CD8-positive, alpha-beta T cell (primary cell): ENCODE measurements at regions of chr1 and their contacts with region 1.

Region 1: DNA sequence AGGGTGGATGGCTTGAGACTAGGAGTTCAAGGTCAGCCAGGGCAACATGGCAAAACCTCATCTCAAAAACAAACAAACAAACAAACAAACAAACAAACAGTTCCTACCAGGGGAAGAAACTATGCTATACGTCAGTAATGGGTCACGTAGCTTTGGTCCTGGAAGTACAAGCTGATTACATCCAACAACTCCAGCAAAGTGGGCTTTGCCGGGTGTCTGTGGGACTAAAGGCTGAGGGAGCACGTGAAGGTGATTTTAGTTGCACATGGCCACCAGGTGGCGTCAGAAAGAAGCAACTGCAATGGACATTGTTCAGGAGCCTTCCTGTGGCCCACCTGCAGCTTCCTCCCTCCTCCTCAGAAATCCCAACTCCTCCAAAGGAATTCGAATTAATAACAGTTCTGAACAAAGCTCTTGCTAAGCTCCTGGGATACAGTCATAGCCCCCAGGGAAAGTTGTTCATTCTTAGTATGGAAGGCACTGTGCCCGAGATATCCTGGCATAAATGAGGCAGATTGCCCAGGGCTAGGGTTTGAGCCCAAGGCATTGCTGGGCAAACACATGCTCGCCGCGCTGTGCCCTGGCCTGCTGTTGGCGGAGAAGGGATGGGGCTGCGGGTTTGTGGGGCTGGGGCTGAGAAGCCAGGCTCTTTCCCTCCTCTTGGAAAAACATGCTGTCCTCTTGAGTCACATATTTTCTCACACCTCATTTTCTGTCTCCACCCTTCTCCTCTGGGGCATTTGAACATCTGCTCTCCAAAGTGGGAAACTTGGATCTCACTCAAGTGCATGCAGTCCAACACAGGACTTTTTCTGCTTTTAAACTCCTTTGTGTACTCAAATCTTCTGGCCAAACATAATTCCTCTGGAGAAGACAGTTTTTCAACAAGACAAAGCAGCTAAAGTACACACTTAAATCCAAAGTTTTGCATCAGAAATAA is 28.6 kb downstream of the AKNAD1 start:
- DNase-seq: peak; percentile 35 to 79 (median 69)
- ATAC-seq: peak; percentile 77
- H3K4me3 ChIP-seq: no peak overlapping the region
- H3K4me3 Mint-ChIP-seq: no peak overlapping the region
- H3K27ac ChIP-seq: no peak overlapping the region
- H3K27ac Mint-ChIP-seq: no peak overlapping the region
- H3K4me1 ChIP-seq: no peaks in the 10 kb centered on the region
- H3K4me1 Mint-ChIP-seq: no peaks in the 10 kb centered on the region
- H3K27me3 ChIP-seq: no peaks in the 10 kb centered on the region
- H3K27me3 Mint-ChIP-seq: no peaks in the 10 kb centered on the region
- CTCF ChIP-seq: peak; percentile 72

Region 2: GRCh38 chr1:108678706-108679105 is 149.6 kb before region 1 on chr1:
- CTCF ChIA-PET with region 1: no interaction called
- POLR2A ChIA-PET with region 1: no interaction called
- intact Hi-C with region 1: no loop called
- DNase-seq: no peak
- ATAC-seq: no peak
- H3K4me3 ChIP-seq: no peak overlapping the region
- H3K4me3 Mint-ChIP-seq: no peak overlapping the region
- H3K27ac ChIP-seq: no peak overlapping the region
- H3K27ac Mint-ChIP-seq: no peak overlapping the region
- H3K4me1 ChIP-seq: peaks cover 8% of the 10 kb centered on the region
- H3K4me1 Mint-ChIP-seq: peaks cover 8% of the 10 kb centered on the region
- H3K27me3 ChIP-seq: no peaks in the 10 kb centered on the region
- H3K27me3 Mint-ChIP-seq: peaks cover 2% of the 10 kb centered on the region
- CTCF ChIP-seq: no peak

Region 3: DNA sequence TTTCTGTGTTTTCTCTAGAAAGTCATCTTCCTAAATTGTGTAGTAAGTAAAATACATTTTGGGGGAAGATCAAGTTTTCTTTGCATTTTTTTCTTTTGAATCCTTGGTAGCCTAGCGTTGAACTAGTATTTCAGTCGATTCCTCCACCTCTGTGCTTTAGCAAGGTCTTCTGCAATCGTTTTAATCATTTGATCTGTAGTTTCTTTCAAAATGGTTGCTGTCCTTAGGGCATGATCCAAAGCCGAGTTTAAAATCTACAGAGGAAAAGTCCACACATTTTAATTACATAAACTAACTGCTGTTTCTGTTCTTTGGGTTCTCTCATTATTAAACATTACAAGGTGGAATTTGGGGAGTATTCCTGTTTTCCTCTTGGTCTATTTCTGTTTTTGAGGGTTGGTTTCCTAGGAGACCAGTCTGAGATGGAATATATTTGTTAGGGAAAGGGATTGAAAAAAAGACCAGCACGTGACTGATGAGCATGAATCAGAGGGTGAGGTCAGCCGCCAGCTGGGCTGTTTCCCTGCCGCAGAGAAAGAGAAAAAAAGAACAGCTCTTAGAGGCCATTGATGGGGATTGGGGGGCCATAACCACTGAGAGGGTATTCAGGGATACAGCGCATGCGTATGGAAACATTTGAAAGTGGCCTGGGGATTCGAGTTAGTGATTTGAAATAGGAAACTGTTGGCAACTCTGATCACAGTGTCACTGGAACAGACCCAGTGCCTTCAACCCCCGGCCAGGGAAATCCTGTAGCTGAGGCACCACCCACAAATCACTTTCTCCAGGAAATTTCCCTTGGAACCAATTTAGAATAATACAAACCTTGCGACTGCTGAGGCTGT is 12.0 kb before region 1 on chr1:
- CTCF ChIA-PET with region 1: interaction called, 33 read pairs
- POLR2A ChIA-PET with region 1: interaction called, 6 read pairs
- intact Hi-C with region 1: no loop called
- DNase-seq: no peak
- ATAC-seq: no peak
- H3K4me3 ChIP-seq: no peak overlapping the region
- H3K4me3 Mint-ChIP-seq: no peak overlapping the region
- H3K27ac ChIP-seq: no peak overlapping the region
- H3K27ac Mint-ChIP-seq: no peak overlapping the region
- H3K4me1 ChIP-seq: no peaks in the 10 kb centered on the region
- H3K4me1 Mint-ChIP-seq: no peaks in the 10 kb centered on the region
- H3K27me3 ChIP-seq: no peaks in the 10 kb centered on the region
- H3K27me3 Mint-ChIP-seq: peaks cover 4% of the 10 kb centered on the region
- CTCF ChIP-seq: no peak

Region 4: GRCh38 chr1:108852221-108852975 is 24.1 kb after region 1 on chr1:
- CTCF ChIA-PET with region 1: interaction called, 28 read pairs
- POLR2A ChIA-PET with region 1: no interaction called
- intact Hi-C with region 1: no loop called
- DNase-seq: no peak
- ATAC-seq: no peak
- H3K4me3 ChIP-seq: no peak overlapping the region
- H3K4me3 Mint-ChIP-seq: no peak overlapping the region
- H3K27ac ChIP-seq: no peak overlapping the region
- H3K27ac Mint-ChIP-seq: no peak overlapping the region
- H3K4me1 ChIP-seq: no peaks in the 10 kb centered on the region
- H3K4me1 Mint-ChIP-seq: peaks cover 4% of the 10 kb centered on the region
- H3K27me3 ChIP-seq: no peaks in the 10 kb centered on the region
- H3K27me3 Mint-ChIP-seq: peaks cover 14% of the 10 kb centered on the region
- CTCF ChIP-seq: no peak

Region 5: DNA sequence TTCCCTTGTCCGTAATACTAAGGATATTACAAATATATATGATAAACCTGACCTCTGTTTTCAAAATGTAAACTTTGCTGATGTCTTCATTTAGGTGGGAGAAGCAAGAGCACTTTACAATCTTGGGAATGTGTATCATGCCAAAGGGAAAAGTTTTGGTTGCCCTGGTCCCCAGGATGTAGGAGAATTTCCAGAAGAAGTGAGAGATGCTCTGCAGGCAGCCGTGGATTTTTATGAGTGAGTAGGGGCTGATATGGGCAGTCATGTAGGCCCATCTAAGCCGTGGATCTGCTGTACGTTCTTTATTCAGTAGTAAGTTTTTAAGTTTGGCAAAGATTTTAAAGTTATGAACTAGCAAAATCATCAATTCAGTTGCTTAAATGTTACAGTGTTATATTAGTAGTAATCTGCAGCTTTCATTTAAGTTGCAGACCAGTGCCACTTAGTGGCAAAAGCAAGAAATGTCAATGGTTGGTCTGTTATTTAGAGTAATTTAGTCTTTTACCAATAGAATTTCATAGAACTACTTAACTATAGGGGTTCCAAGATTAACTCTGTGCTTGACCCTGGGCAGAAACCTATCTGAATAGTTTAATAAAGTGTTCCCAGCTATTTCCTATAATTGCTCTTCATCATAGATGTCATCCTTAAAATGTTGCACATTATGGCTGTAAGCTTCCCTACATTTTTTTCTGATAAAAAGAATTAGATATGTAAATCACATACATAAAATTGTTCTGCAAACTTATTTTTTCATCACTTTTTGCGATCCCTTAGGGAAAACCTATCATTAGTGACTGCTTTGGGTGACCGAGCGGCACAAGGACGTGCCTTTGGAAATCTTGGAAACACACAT is 69.8 kb after region 1 on chr1:
- CTCF ChIA-PET with region 1: interaction called, 227 read pairs
- POLR2A ChIA-PET with region 1: no interaction called
- intact Hi-C with region 1: loop called (anchors 1 kb)
- DNase-seq: peak in 5 of 9 experiments; percentile 9 to 74 (median 35)
- ATAC-seq: peak; percentile 78
- H3K4me3 ChIP-seq: no peak overlapping the region
- H3K4me3 Mint-ChIP-seq: no peak overlapping the region
- H3K27ac ChIP-seq: no peak overlapping the region
- H3K27ac Mint-ChIP-seq: no peak overlapping the region
- H3K4me1 ChIP-seq: no peaks in the 10 kb centered on the region
- H3K4me1 Mint-ChIP-seq: no peaks in the 10 kb centered on the region
- H3K27me3 ChIP-seq: no peaks in the 10 kb centered on the region
- H3K27me3 Mint-ChIP-seq: peaks cover 2% of the 10 kb centered on the region
- CTCF ChIP-seq: peak; percentile 68

Region 6: GRCh38 chr1:109397538-109398342 is 569.4 kb after region 1 on chr1 and contains the start of gene SORT1:
- CTCF ChIA-PET with region 1: no interaction called
- POLR2A ChIA-PET with region 1: no interaction called
- intact Hi-C with region 1: loop called in 1 of 2 experiments (anchors 2 kb)
- DNase-seq: peak; percentile 25 to 84 (median 71)
- ATAC-seq: peak; percentile 97
- H3K4me3 ChIP-seq: peak within 1 kb of the TSS; percentile 49 to 53
- H3K4me3 Mint-ChIP-seq: peak within 1 kb of the TSS; percentile 83
- H3K27ac ChIP-seq: no peak within 1 kb of the TSS
- H3K27ac Mint-ChIP-seq: no peak within 1 kb of the TSS
- H3K4me1 ChIP-seq: peaks cover 9% of the 10 kb centered on the region
- H3K4me1 Mint-ChIP-seq: peaks cover 15% of the 10 kb centered on the region
- H3K27me3 ChIP-seq: peaks cover 10 to 21% of the 10 kb centered on the region in 2 experiments
- H3K27me3 Mint-ChIP-seq: peaks cover 34% of the 10 kb centered on the region
- CTCF ChIP-seq: no peak
- total RNA-seq, gene SORT1: 0.61 to 0.73 TPM